Mammary epithelial cell (primary cell): ENCODE measurements at regions of chr7 and their contacts with region 1.

Region 1: GRCh38 chr7:144786522-144786921 is 49.3 kb downstream of the TPK1 start:
- DNase-seq: no peak
- H3K4me3 ChIP-seq: no peak overlapping the region
- H3K27ac ChIP-seq: no peak overlapping the region
- H3K4me1 ChIP-seq: no peaks in the 10 kb centered on the region
- H3K27me3 ChIP-seq: peaks cover 1% of the 10 kb centered on the region
- CTCF ChIP-seq: peak in 1 of 2 donors; percentile 50

Region 2: DNA sequence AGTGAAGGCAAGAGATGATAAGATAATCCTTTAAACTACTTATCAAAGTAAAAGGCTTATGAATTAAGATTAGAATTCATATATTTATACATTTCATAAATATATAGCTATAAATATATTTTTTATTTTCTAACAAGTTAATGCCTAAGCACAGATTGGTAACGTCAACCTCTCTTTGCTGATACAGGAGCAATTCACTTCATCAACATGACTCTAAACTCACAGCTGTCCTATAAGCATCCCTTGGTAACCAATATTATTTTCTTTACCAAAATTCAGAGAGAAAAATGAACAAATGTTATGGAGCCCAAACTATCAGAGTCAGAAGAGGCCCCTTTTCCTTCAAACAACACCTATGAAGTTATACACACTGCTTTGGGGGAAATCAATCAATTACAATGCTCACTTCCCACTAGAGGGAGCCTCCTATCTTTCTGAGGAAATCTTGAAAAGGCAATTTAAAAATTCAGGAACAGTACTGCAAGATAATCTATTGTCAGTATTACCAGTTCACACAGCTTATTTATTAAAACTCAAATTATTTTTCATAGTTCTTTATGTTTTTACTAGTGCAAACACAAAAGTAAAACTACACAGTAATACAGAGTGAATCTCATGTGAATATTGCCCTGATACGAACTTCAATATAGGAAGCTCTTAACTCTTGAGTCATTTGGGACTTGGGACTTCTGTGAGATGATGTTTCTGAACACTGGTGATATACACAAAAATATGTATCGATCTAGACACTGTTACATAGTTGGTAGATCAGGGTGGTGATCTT is 332.1 kb before region 1 on chr7:
- CTCF ChIA-PET with region 1: no interaction called
- dilution Hi-C with region 1: no loop called
- in situ Hi-C with region 1: no loop called
- intact Hi-C with region 1: loop called (anchors 10 kb)
- DNase-seq: no peak
- H3K4me3 ChIP-seq: no peak overlapping the region
- H3K27ac ChIP-seq: no peak overlapping the region
- H3K4me1 ChIP-seq: no peaks in the 10 kb centered on the region
- H3K27me3 ChIP-seq: no peaks in the 10 kb centered on the region
- CTCF ChIP-seq: peak; percentile 45 to 54

Region 3: GRCh38 chr7:144670218-144670617 is 116.3 kb before region 1 on chr7:
- CTCF ChIA-PET with region 1: interaction called, 3 read pairs
- dilution Hi-C with region 1: no loop called
- in situ Hi-C with region 1: no loop called
- intact Hi-C with region 1: loop called (anchors 1 kb)
- DNase-seq: peak; percentile 33
- H3K4me3 ChIP-seq: no peak overlapping the region
- H3K27ac ChIP-seq: no peak overlapping the region
- H3K4me1 ChIP-seq: peaks cover 10% of the 10 kb centered on the region
- H3K27me3 ChIP-seq: no peaks in the 10 kb centered on the region
- CTCF ChIP-seq: peak in 1 of 2 donors; percentile 32